ENCODE measurements at regions of chr4 and their contacts with region 1.

Region 1: GRCh38 chr4:121869841-121870656 is at the start of gene BBS7:
- DNase-seq: peak; percentile 95 to 99
- H3K4me3 ChIP-seq: peak within 1 kb of the TSS; percentile 75 to 87
- H3K27ac ChIP-seq: peak within 1 kb of the TSS; percentile 91 to 93
- H3K4me1 ChIP-seq: peaks cover 0 to 2% of the 10 kb centered on the region in 2 donors
- H3K27me3 ChIP-seq: no peaks in the 10 kb centered on the region
- CTCF ChIP-seq: no peak
- total RNA-seq, gene BBS7: 5.6 TPM

Region 2: GRCh38 chr4:121800961-121801714 is 68.9 kb before region 1 on chr4 and contains the start of gene EXOSC9:
- intact Hi-C with region 1: loop called (anchors 2 kb)
- DNase-seq: peak; percentile 59 to 96
- H3K4me3 ChIP-seq: peak within 1 kb of the TSS; percentile 78 to 90
- H3K27ac ChIP-seq: peak within 1 kb of the TSS; percentile 70 to 85
- H3K4me1 ChIP-seq: peaks cover 0 to 8% of the 10 kb centered on the region in 2 donors
- H3K27me3 ChIP-seq: no peaks in the 10 kb centered on the region
- CTCF ChIP-seq: no peak
- total RNA-seq, gene EXOSC9: 11.9 TPM

Region 3: DNA sequence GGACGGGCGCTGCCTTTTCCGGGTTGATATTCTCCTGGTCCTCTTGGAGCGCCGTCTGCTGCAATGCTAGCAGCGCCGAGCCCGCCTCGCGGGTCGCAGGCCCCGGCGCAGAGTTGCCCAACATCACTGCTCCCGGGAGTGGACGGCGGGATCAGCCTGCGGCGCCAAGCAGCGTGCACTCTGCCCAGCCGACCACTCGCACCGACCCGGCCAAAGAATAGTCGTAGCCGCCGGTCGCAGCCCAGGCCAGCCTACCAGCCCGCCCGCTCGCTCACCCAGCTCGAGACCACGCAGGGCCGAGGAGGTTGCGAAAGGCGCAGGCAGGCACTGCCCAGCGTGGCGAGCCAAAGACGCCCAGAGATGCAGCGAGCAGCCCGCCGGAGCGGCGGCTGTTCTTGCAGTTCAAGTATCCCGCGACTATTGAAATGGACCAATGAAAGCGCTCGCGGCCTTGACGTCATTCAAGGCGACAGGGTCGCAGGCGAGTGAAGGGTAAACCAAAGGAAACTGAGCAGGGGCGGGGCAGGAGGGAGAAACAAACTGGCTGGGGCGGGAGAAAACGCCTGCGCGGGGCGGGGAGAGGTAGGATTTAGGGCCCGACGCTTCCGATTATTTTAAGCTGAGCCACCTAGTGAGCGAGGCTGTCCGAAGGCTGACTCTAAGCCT is 46.4 kb before region 1 on chr4 and contains the start of gene CCNA2:
- intact Hi-C with region 1: loop called (anchors 2 kb)
- DNase-seq: peak; percentile 91 to 99
- H3K4me3 ChIP-seq: peak within 1 kb of the TSS; percentile 68 to 76
- H3K27ac ChIP-seq: peak within 1 kb of the TSS; percentile 51 to 73
- H3K4me1 ChIP-seq: peaks cover 4 to 6% of the 10 kb centered on the region in 2 donors
- H3K27me3 ChIP-seq: no peaks in the 10 kb centered on the region
- CTCF ChIP-seq: peak in 1 of 3 experiments; percentile 16
- total RNA-seq, gene CCNA2: not detected

Region 4: DNA sequence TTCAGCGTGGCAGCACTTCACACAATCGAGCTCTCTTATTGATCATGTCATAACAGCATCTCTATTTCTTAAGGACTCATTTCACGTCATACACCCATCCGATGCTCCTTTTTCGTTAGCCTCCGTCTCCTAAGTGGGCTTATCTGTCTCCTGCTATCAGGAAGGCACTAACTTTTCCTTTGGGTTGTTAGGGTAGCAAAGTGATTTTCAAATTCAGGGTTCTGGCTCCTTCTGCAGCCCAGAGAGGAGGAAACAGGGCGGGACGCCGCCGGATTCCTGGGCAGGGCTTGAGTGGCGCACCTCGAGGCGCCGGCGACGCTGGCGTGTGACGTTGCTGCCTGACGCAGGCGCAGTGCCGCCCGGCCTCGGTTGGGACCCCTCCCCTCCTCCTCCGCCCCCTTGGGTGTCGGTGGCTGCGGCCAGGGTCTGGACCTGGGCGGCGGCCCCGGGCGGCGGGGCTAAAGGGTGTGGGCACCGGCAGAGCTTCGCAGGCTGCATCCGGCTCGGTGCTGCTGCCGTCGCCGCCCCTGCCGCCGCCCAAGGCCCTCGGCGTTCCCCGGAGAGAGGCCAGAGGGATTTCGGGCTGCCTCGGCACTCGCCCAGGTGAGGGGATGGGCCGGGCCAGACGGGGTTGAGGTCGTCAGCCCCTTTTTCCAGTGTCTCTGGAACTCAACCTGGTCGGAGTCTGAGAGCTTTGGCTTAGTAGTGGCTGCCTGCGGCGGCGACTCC is 282.1 kb after region 1 on chr4 and contains the start of gene BLTP1:
- intact Hi-C with region 1: loop called (anchors 5 kb)
- DNase-seq: peak; percentile 31 to 91
- H3K4me3 ChIP-seq: peak within 1 kb of the TSS; percentile 92 to 97
- H3K27ac ChIP-seq: peak within 1 kb of the TSS; percentile 97 to 98
- H3K4me1 ChIP-seq: peaks cover 0 to 12% of the 10 kb centered on the region in 2 donors
- H3K27me3 ChIP-seq: no peaks in the 10 kb centered on the region
- CTCF ChIP-seq: no peak
- total RNA-seq, gene BLTP1: 188 TPM

Measured in ascending aorta (tissue), 2 donors.